Testis (tissue), 5 donors: ENCODE measurements at regions of chr4 and their contacts with region 1.

Region 1: GRCh38 chr4:112636688-112637551 is at the starts of genes LARP7 and ZGRF1:
- DNase-seq: peak; percentile 100
- H3K4me3 ChIP-seq: peak within 1 kb of the TSS; percentile 58 to 89
- H3K27ac ChIP-seq: peak within 1 kb of the TSS; percentile 97 to 99
- H3K4me1 ChIP-seq: peaks cover 8% of the 10 kb centered on the region
- H3K27me3 ChIP-seq: no peaks in the 10 kb centered on the region
- CTCF ChIP-seq: peak; percentile 98 to 99 (median 98)
- POLR2A ChIP-seq: no peak
- total RNA-seq, gene LARP7: 40.6 to 41.7 TPM
- total RNA-seq, gene ZGRF1: 16.9 to 25.7 TPM

Region 2: GRCh38 chr4:112472318-112472717 is 164.6 kb before region 1 on chr4:
- intact Hi-C with region 1: no loop called
- DNase-seq: no peak
- H3K4me3 ChIP-seq: no peak overlapping the region
- H3K27ac ChIP-seq: no peak overlapping the region
- H3K4me1 ChIP-seq: no peaks in the 10 kb centered on the region
- H3K27me3 ChIP-seq: no peaks in the 10 kb centered on the region
- CTCF ChIP-seq: no peak
- POLR2A ChIP-seq: no peak

Region 3: GRCh38 chr4:112765317-112765975 is 128.5 kb after region 1 on chr4:
- intact Hi-C with region 1: loop called (anchors 10 kb)
- DNase-seq: no peak
- H3K4me3 ChIP-seq: no peak overlapping the region
- H3K27ac ChIP-seq: no peak overlapping the region
- H3K4me1 ChIP-seq: peaks cover 2% of the 10 kb centered on the region
- H3K27me3 ChIP-seq: no peaks in the 10 kb centered on the region
- CTCF ChIP-seq: peak; percentile 31 to 55 (median 45)
- POLR2A ChIP-seq: no peak